Transverse colon (tissue), 4 donors: ENCODE measurements at regions of chr9 and their contacts with region 1.

Region 1: GRCh38 chr9:23598994-23599393 is 227.0 kb downstream of the ELAVL2 start:
- DNase-seq: no peak
- H3K4me3 ChIP-seq: no peak overlapping the region
- H3K27ac ChIP-seq: no peak overlapping the region
- H3K4me1 ChIP-seq: no peaks in the 10 kb centered on the region
- H3K27me3 ChIP-seq: no peaks in the 10 kb centered on the region
- CTCF ChIP-seq: no peak
- EP300 ChIP-seq: no peak
- POLR2A ChIP-seq: no peak

Region 2: DNA sequence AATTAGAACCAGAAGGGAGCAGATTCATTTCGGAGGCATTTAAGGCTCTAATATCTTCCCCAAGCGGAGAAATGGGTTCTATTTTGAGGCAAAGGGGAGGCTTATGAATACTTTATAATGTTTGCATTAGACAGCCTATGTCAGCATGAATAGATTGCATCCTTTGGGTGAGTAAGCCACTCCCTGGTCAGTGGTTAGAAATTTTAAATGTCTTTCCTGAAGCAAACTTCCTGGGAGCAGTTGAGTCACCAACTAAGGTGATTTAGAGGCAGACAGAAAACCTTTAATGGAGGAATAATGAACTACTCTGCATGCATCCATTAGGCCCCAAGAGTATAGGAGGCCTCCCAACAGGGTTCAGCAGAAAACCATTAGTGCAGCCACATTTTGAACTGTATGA is 22.2 kb after region 1 on chr9:
- in situ Hi-C with region 1: no loop called
- intact Hi-C with region 1: loop called (anchors 1 kb)
- DNase-seq: no peak
- H3K4me3 ChIP-seq: no peak overlapping the region
- H3K27ac ChIP-seq: no peak overlapping the region
- H3K4me1 ChIP-seq: no peaks in the 10 kb centered on the region
- H3K27me3 ChIP-seq: no peaks in the 10 kb centered on the region
- CTCF ChIP-seq: no peak
- EP300 ChIP-seq: no peak
- POLR2A ChIP-seq: no peak